Dendritic cell treated with granulocyte-macrophage colony-stimulating factor and Interleukin-4, amounts not matched to agents 40 ng/mL and 50 ng/mL, for 4 days (primary cell): ENCODE measurements at regions of chr1 and their contacts with region 1.

Region 1: DNA sequence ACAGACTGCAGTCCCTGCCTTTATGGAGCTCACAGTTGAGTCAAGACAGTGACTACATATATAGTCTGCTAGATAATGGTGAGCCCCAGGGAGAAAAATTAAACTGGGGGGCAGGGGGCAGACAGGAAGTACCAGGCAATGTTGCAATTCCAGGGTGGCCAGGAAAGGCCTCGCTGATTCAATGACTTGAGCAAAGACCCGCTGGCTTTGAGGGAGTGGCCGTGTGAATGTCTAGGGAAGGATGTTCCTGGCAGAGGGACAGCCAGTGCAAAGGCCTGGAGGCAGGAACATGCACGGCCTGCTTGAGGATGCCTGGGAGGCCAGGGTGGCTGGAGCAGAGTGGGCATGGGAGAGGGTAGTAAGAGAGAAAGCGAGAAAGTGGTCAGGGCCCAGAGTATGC is 23.0 kb upstream of the EPHA8 start:
- H3K4me3 Mint-ChIP-seq: no peak overlapping the region
- H3K27ac Mint-ChIP-seq: no peak overlapping the region
- H3K4me1 Mint-ChIP-seq: peaks cover 8% of the 10 kb centered on the region
- H3K27me3 Mint-ChIP-seq: peaks cover 1% of the 10 kb centered on the region

Region 2: GRCh38 chr1:22420455-22421053 is 119.8 kb before region 1 on chr1:
- intact Hi-C with region 1: no loop called
- H3K4me3 Mint-ChIP-seq: no peak overlapping the region
- H3K27ac Mint-ChIP-seq: no peak overlapping the region
- H3K4me1 Mint-ChIP-seq: no peaks in the 10 kb centered on the region
- H3K27me3 Mint-ChIP-seq: peaks cover 30% of the 10 kb centered on the region

Region 3: DNA sequence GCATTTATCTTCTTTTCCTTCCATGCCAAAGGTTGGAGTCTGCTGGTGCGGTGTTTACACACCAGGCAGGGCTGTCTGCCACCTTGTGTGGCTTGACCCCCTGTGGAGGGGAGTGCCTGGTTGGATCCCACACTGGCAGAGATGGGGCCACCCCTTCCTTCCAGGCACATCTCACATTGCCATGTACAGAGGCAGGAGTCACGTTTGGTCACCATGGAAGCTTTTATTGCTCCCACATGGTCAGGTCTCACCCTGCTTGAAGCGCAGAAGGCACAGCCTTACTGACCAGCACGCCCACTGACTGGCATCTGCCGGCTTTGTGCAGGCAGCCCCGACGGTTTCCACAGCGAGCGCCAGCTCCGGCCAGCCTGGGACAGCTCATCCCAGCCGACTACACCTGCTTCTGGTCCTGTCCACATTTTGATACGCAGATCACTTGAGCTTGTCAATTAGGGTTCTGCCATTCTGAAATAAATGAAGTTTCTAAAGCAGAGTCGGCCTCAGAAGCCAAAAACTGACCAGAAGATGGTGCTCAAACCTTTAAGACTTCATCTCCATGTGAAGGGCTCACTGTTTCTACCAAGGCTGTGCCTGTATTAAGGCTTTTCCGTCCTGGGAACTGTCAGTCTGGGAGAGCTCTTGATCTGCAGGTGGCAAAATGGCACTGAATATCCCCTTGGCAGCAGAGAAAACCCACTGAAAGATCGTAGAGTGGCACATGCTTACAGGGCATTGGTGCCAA is 12.6 kb before region 1 on chr1:
- intact Hi-C with region 1: no loop called
- H3K4me3 Mint-ChIP-seq: no peak overlapping the region
- H3K27ac Mint-ChIP-seq: no peak overlapping the region
- H3K4me1 Mint-ChIP-seq: peaks cover 10% of the 10 kb centered on the region
- H3K27me3 Mint-ChIP-seq: no peaks in the 10 kb centered on the region

Region 4: DNA sequence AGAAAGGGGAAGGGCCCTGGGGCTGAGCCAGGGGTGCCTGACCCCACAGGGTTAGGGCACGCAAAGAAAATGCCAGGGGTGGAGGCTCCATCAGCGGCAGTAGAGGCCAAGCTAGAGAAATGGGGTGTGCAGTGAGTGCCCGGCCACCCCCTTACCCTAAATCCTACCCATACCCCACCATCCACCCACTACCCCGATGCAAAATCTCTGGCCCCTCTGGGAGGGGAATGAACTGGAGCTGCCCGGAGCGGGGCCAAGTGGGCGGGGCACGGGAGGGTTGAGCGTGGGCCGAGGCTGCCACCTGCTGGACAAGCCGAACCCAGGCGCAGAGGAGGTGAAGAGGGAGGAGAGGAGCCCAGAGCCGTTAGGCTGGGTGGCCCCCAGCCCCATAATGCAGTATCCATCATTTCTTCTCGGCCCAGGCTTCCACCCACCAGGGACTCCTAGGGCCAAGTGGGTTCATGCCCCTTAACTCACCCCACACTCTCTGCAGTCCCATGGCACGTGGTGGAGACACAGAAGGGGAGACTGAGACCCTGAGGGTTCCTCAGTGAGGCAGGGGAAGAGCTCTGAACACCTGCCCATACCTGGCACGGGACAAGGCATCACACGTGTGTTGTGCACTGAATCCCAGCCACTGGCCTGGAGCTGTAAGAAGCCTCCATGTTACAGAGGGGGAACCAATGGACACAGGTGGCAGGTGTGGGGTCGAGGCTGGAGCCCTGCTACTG is 101.7 kb after region 1 on chr1:
- intact Hi-C with region 1: loop called (anchors 5 kb)
- H3K4me3 Mint-ChIP-seq: peak overlapping the region; percentile 4
- H3K27ac Mint-ChIP-seq: peak overlapping the region; percentile 85
- H3K4me1 Mint-ChIP-seq: peaks cover 85% of the 10 kb centered on the region
- H3K27me3 Mint-ChIP-seq: peaks cover 10% of the 10 kb centered on the region